Activated B cell treated with CpG ODN at 0.5 μM for 24 hours (primary cell): ENCODE measurements at regions of chr1 and their contacts with region 1.

Region 1: DNA sequence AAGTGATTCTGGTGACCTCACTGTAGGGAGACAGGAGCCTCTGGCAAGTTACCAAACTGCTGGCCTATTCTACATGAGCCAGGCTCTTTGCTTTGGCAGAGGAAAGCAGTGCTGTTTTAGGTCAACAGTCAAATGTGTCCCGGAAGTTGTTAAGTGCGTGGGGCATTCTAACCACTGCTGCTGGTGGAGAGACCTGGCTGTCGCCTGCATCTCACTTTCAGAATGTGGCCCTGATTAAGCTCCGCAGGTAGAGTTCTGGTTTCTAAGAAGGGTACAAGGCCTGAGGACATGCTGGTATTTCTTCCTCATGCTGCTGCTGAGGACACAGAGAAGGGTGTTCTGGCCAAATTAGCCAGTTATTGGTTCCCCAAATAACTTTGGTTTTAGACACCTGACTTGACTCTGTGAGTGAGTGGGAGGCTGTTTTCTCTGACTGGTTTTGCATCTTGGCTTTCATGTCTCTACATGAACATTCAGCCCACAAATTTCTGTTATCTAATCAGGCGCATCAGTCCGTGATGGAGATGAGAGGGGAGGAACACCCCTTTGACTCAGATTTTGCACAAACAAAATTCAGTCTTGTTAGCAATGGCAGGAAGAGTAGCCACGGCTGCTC is 120.8 kb downstream of the LMO4 start:
- DNase-seq: peak; percentile 23
- ATAC-seq: peak; percentile 86
- H3K4me3 Mint-ChIP-seq: peak overlapping the region; percentile 51
- H3K27ac Mint-ChIP-seq: peak overlapping the region; percentile 90
- H3K4me1 Mint-ChIP-seq: peaks cover 33% of the 10 kb centered on the region
- H3K27me3 Mint-ChIP-seq: no peaks in the 10 kb centered on the region
- CTCF ChIP-seq: no peak

Region 2: DNA sequence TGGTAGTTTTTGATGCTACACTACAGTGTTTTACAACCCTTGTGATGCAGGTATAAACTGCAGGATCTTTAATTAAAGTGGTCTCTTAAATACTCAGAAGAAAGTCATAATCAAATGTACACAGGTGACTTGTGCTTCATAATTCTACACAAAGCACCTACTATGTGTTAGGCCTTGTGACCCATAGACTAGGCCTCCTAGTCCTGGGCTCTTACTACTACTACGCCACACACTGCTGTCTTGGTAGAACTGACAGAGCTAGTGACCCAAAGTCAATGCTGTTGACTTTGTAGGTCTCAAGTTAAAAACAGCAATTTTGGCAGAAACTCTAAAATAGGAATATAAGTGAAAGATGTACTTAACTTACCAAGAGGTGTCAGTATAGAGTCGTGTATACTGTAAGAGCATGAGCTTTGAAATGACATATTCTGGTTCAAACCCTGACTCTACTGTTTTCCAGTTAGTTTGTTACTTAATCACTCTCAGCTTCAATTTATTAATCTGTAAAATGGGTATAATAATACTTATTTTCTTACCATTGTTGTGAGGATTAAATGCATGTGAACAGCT is 169.4 kb before region 1 on chr1:
- CTCF ChIA-PET with region 1: no interaction called
- POLR2A ChIA-PET with region 1: no interaction called
- intact Hi-C with region 1: no loop called
- DNase-seq: no peak
- ATAC-seq: no peak
- H3K4me3 Mint-ChIP-seq: no peak overlapping the region
- H3K27ac Mint-ChIP-seq: no peak overlapping the region
- H3K4me1 Mint-ChIP-seq: no peaks in the 10 kb centered on the region
- H3K27me3 Mint-ChIP-seq: peaks cover 3% of the 10 kb centered on the region
- CTCF ChIP-seq: no peak

Region 3: GRCh38 chr1:87292684-87293493 is 156.6 kb before region 1 on chr1:
- CTCF ChIA-PET with region 1: interaction called, 3 read pairs
- POLR2A ChIA-PET with region 1: no interaction called
- intact Hi-C with region 1: loop called (anchors 1 kb)
- DNase-seq: no peak
- ATAC-seq: peak; percentile 52
- H3K4me3 Mint-ChIP-seq: no peak overlapping the region
- H3K27ac Mint-ChIP-seq: no peak overlapping the region
- H3K4me1 Mint-ChIP-seq: no peaks in the 10 kb centered on the region
- H3K27me3 Mint-ChIP-seq: peaks cover 2% of the 10 kb centered on the region
- CTCF ChIP-seq: peak; percentile 71

Region 4: DNA sequence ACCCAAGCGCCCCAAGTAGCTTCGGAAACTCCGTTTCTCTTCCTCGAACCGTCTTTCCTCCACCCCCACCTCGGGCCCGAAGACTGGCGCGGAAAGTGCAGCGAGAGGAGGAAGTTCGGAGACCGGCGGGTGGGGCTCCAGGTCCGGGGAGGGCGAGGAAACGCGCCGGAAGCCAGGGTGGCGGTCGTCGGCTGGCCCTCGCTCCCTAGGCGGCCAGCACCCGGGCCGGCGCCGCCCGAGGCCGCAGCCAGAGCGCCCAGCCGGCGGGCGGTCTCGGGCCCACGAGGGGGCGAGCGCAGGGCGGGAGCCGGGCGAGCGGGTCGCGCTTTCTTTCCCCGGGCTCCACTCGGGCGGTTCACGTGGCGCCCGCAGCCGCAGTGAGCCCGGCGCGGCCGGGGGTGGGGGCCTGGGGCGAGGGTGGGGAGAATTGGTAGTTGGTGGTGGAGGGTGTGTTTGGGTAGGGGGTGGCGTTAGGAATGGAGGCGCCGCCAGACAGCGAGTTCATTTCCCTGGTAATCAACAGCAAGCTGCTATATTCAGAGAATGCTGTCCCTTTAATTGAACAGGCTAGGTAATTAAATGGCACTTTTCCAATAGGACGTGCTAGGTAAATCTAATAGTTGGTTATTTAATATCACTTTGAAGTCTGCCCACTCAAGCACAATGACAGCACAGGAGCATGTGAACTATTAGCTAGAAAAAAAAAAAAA is 114.1 kb before region 1 on chr1:
- CTCF ChIA-PET with region 1: no interaction called
- POLR2A ChIA-PET with region 1: interaction called, 14 read pairs
- intact Hi-C with region 1: no loop called
- DNase-seq: peak; percentile 69
- ATAC-seq: peak; percentile 65
- H3K4me3 Mint-ChIP-seq: peak overlapping the region; percentile 89
- H3K27ac Mint-ChIP-seq: peak overlapping the region; percentile 93
- H3K4me1 Mint-ChIP-seq: peaks cover 62% of the 10 kb centered on the region
- H3K27me3 Mint-ChIP-seq: no peaks in the 10 kb centered on the region
- CTCF ChIP-seq: no peak

Region 5: GRCh38 chr1:87392248-87393192 is 56.9 kb before region 1 on chr1:
- CTCF ChIA-PET with region 1: no interaction called
- POLR2A ChIA-PET with region 1: no interaction called
- intact Hi-C with region 1: loop called (anchors 5 kb)
- DNase-seq: no peak
- ATAC-seq: no peak
- H3K4me3 Mint-ChIP-seq: no peak overlapping the region
- H3K27ac Mint-ChIP-seq: no peak overlapping the region
- H3K4me1 Mint-ChIP-seq: peaks cover 25% of the 10 kb centered on the region
- H3K27me3 Mint-ChIP-seq: no peaks in the 10 kb centered on the region
- CTCF ChIP-seq: no peak

Region 6: DNA sequence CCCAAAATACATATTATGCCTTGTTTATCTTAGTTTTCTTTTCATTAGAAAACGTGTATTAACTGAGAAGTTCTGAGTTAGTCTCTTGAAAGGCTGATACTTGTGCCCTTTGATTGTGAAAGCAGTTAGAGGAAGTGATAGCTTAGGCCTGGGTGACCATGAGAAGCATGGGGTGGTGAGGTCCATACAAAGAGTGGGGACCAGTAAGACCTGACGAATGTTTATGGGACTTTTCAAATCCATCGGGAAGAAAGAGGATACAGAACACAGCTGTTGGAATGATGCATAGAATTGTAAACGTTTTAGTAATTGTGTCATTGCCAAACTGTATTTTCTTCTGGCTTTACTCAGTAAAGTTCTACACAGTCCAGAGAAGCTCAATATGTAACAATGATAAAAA is 139.0 kb after region 1 on chr1:
- CTCF ChIA-PET with region 1: no interaction called
- POLR2A ChIA-PET with region 1: no interaction called
- intact Hi-C with region 1: loop called (anchors 2 kb)
- DNase-seq: no peak
- ATAC-seq: peak; percentile 52
- H3K4me3 Mint-ChIP-seq: no peak overlapping the region
- H3K27ac Mint-ChIP-seq: peak overlapping the region; percentile 41
- H3K4me1 Mint-ChIP-seq: peaks cover 31% of the 10 kb centered on the region
- H3K27me3 Mint-ChIP-seq: no peaks in the 10 kb centered on the region
- CTCF ChIP-seq: no peak

Region 7: GRCh38 chr1:87826681-87827251 is 377.3 kb after region 1 on chr1:
- CTCF ChIA-PET with region 1: no interaction called
- POLR2A ChIA-PET with region 1: no interaction called
- intact Hi-C with region 1: loop called (anchors 2 kb)
- DNase-seq: no peak
- ATAC-seq: peak; percentile 95
- H3K4me3 Mint-ChIP-seq: peak overlapping the region; percentile 44
- H3K27ac Mint-ChIP-seq: peak overlapping the region; percentile 65
- H3K4me1 Mint-ChIP-seq: peaks cover 43% of the 10 kb centered on the region
- H3K27me3 Mint-ChIP-seq: no peaks in the 10 kb centered on the region
- CTCF ChIP-seq: no peak